Vagina (tissue), 2 donors: ENCODE measurements at regions of chr17 and their contacts with region 1.

Region 1: GRCh38 chr17:1179818-1180742 is at the start of gene ABR:
- DNase-seq: no peak
- H3K4me3 ChIP-seq: peak within 1 kb of the TSS; percentile 88 to 96
- H3K27ac ChIP-seq: peak within 1 kb of the TSS; percentile 93
- H3K4me1 ChIP-seq: peaks cover 36% of the 10 kb centered on the region
- H3K27me3 ChIP-seq: no peaks in the 10 kb centered on the region
- CTCF ChIP-seq: no peak
- POLR2A ChIP-seq: peak in 1 of 2 donors; percentile 51
- total RNA-seq, gene ABR: 90.8 TPM

Region 2: DNA sequence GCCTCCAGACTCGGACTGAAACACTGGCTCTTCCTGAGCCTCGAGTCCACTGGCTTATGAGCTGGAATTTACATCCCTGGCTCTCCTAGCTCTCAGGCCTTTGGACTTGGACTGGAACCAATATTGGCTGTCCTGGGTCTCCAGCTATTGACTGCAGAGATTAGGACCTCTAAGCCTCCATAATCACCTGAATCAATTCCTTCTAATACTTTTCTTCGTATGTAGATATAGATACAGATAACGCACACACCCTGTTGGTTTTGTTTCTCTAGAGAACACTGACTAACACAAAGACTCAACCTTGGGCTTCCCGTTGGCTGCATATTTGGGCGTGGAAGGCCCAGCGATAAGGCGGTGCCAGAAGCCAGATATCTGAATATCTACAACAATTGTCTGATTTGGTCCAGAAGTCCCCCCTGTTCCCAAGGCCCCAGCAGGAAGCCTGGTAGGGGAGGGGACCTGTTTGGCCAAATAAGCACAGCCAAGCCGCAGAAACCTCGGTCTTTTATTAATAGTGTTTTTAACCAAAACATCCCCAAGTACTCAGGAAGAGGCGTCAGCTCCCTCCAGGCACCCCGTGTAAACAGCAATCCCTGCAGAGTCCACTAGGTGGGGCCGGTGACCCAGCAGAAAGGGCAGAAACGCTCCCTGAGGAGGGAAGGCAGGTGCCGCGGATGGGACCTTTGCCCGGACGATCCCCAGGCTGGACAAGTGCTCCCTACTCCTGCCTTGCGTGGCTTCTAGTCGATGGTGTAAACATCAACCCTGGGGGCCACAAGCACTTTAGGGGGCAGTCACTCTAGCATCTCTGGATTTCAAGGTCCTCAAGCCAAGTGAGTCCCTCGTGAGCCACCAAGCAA is 57.3 kb before region 1 on chr17:
- intact Hi-C with region 1: loop called (anchors 5 kb)
- DNase-seq: no peak
- H3K4me3 ChIP-seq: peak overlapping the region in 1 of 2 donors; percentile 22
- H3K27ac ChIP-seq: peak overlapping the region; percentile 75
- H3K4me1 ChIP-seq: peaks cover 49% of the 10 kb centered on the region
- H3K27me3 ChIP-seq: no peaks in the 10 kb centered on the region
- CTCF ChIP-seq: peak; percentile 81 to 97 (median 82)
- POLR2A ChIP-seq: no peak